Activated CD4-positive, alpha-beta memory T cell treated with anti-CD3 and anti-CD28 coated beads for 36 hours (primary cell): ENCODE measurements at regions of chr4 and their contacts with region 1.

Region 1: DNA sequence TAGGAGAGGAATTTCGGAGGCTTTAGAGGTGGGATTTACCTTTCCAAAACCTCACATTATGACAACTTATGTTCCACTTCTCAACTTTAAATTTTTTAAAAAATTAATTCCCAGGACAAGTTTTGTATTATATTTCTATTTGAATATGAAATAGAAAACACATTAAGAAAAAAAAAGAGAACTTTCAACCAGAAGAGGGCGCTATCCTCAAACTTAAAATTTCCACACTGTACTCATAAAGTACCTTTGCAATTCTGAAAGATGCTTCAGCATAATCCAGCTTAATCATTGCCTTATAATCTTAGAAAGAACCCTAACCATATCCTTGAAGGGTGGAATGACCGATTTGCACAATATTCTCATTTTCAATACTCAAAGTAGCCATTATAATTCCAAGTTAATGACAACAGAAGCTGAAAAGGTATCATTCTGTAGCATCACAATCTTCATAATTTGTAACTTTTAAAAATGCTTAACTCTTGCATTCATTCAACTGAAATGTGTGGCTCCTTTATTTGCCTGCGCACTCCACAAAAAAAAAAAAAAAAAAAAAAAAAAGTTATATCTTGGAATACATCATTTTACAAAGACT is 158.0 kb downstream of the KCNIP4 start:
- DNase-seq: no peak
- H3K4me3 Mint-ChIP-seq: no peak overlapping the region
- H3K27ac Mint-ChIP-seq: no peak overlapping the region
- H3K4me1 Mint-ChIP-seq: no peaks in the 10 kb centered on the region
- H3K27me3 Mint-ChIP-seq: no peaks in the 10 kb centered on the region

Region 2: DNA sequence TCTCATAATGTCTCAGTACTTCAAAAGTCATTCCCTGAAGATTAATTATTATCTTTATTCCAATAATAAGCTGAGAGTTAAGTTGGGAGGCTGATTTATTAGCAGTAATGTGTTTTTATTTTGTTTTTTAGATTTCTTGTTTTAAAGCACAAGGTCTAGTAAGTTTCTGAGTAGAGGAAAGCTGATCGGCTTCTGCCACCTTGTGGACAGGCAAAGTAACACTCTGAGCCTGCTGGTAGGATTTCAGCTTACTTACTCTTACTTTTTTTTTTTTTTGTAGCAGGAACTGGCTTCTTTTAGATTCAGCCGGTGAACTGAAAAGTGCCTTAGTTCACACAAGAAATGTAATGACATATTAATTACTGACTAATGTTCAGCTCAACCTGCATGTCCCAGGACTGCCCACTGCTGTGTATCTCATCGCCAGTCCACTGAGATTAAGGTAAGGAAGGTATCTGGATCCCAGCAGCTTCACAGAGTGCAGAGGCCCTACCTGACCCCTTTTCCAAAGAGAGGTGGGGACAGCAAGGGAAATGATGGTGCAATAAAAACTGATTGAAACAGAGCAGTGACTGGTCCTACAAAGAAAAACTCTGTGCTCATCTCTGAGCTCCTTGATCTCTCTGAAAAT is 598.8 kb after region 1 on chr4:
- CTCF ChIA-PET with region 1: interaction called, 61 read pairs
- POLR2A ChIA-PET with region 1: no interaction called
- intact Hi-C with region 1: loop called (anchors 1 kb)
- DNase-seq: peak; percentile 40
- H3K4me3 Mint-ChIP-seq: no peak overlapping the region
- H3K27ac Mint-ChIP-seq: no peak overlapping the region
- H3K4me1 Mint-ChIP-seq: peaks cover 2% of the 10 kb centered on the region
- H3K27me3 Mint-ChIP-seq: no peaks in the 10 kb centered on the region